CD4-positive, alpha-beta T cell (primary cell): ENCODE measurements at regions of chr22 and their contacts with region 1.

Region 1: DNA sequence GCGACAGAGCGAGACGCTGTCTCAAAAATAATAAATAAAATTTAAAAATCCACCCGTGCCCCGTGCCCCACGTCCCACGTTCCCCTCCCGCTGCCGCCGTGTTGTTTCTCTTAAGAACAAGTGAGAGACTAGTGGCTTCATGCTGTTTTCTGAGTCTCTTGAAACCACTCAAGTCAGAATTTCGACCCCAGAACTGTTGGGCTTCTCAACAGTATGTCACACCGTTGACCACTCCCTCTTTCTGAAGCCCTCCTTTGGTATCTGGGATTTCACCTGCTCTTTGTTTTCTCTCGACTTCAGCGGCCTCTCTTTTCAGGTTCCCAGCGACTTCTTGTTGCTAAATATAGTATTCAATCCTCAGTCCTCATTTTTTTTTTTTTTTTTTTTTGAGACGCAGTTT is 974 bp downstream of the PPIL2 start:
- DNase-seq: no peak
- ATAC-seq: no peak
- H3K4me3 ChIP-seq: peak overlapping the region; percentile 95
- H3K4me3 Mint-ChIP-seq: peak overlapping the region; percentile 99
- H3K27ac ChIP-seq: no peak overlapping the region
- H3K27ac Mint-ChIP-seq: peak overlapping the region; percentile 92
- H3K4me1 ChIP-seq: peaks cover 30% of the 10 kb centered on the region
- H3K4me1 Mint-ChIP-seq: peaks cover 32% of the 10 kb centered on the region
- H3K27me3 ChIP-seq: no peaks in the 10 kb centered on the region
- H3K27me3 Mint-ChIP-seq: no peaks in the 10 kb centered on the region
- CTCF ChIP-seq: no peak

Region 2: DNA sequence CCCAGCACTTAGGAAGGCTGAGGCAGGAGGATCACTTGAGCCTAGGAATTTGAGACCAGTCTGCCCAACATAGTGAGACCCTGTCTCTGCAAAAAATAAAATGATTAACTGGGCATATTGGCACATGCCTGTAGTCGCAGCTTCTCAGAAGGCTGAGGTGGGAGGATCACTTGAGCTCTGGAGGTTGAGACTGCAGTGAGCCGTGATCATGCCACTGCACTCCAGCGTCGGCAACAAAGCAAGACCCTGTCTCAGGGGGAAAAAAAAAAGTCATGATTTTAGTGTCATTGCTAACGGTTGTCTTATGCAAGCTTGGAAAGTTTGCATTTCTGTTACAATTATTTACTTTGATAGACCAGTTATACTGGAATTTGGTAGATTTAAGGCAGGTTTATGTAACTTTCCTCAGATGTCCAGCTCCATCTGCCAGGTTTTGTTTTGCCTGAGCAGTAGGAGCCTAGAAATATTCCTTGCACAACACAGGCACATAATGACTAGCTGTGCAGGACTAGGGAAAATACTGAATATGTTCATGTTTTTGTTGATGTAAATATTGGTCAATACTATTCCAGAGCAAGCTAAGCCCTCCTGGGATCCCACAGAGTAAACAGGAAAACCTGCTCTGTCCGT is 87.2 kb before region 1 on chr22:
- CTCF ChIA-PET with region 1: no interaction called
- POLR2A ChIA-PET with region 1: no interaction called
- intact Hi-C with region 1: no loop called
- DNase-seq: no peak
- ATAC-seq: no peak
- H3K4me3 ChIP-seq: no peak overlapping the region
- H3K4me3 Mint-ChIP-seq: no peak overlapping the region
- H3K27ac ChIP-seq: no peak overlapping the region
- H3K27ac Mint-ChIP-seq: no peak overlapping the region
- H3K4me1 ChIP-seq: peaks cover 68% of the 10 kb centered on the region
- H3K4me1 Mint-ChIP-seq: peaks cover 49% of the 10 kb centered on the region
- H3K27me3 ChIP-seq: no peaks in the 10 kb centered on the region
- H3K27me3 Mint-ChIP-seq: no peaks in the 10 kb centered on the region
- CTCF ChIP-seq: no peak

Region 3: DNA sequence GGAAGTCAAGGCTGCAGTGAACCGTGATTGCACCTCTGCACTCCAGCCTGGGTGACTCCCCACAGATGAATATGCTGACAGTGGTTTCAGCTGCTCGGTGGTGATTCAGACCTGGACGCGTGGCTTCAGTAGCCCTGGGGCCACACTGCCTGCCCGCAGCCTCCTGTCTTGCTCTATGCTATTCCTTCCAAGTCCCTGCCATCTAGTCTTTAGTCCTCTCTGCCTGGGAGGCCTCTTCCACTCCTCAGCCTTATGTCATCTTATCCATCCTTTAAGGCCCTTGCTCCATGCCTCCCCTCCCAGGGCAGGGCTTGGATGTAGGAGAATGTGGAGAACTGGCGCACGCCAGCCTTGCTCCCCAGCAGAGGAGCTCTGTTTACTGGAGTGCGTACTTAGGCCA is 60.0 kb before region 1 on chr22:
- CTCF ChIA-PET with region 1: no interaction called
- POLR2A ChIA-PET with region 1: no interaction called
- intact Hi-C with region 1: no loop called
- DNase-seq: no peak
- ATAC-seq: no peak
- H3K4me3 ChIP-seq: no peak overlapping the region
- H3K4me3 Mint-ChIP-seq: no peak overlapping the region
- H3K27ac ChIP-seq: no peak overlapping the region
- H3K27ac Mint-ChIP-seq: peak overlapping the region; percentile 42
- H3K4me1 ChIP-seq: peaks cover 24% of the 10 kb centered on the region
- H3K4me1 Mint-ChIP-seq: peaks cover 46% of the 10 kb centered on the region
- H3K27me3 ChIP-seq: no peaks in the 10 kb centered on the region
- H3K27me3 Mint-ChIP-seq: no peaks in the 10 kb centered on the region
- CTCF ChIP-seq: no peak

Region 4: DNA sequence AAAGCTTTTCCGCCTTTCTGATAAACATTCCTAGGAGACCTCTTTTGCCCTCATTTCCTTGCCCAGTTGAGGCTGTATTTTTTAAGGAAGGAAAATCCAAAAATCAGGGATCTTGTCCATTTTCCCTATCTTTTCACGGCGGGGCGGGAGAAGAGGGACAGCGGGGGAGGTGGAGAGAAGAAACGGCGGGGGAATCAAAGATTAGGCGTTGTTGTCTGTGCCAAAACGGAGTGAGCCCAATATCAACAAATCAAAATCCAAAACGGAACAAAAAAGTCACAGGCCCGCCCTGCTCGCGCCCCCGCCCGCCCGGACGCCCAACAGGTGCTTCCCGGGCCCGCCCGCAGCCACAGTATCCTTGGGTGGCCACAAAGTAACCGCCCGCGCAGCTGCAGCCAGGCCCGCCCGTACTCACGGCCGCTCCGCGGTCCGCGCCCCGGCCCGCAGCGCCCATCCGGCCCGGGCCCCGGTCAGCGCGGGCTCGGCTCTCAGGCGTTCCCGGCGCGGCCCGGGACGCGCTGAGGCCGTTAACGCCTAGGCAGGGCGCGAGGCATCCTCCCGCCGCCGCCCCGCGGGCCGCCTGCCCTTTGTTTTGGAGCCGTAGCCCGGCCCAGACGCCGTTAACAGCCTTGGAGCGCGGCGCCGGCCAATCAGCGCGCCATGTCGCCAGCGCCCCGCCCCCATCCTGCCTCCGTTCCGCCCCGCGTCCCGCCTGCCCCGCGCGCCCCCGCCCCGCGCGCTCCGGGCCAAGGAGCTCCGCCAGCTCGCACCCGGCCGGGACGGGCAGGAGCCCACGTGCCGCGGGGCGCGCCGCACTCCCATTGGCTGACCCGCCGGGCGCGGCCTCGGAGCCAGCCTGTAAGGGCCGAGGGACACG is 68.7 kb after region 1 on chr22 and contains the start of gene YPEL1:
- CTCF ChIA-PET with region 1: no interaction called
- POLR2A ChIA-PET with region 1: no interaction called
- intact Hi-C with region 1: loop called in 1 of 2 experiments (anchors 2 kb)
- DNase-seq: peak; percentile 91 to 99 (median 96)
- ATAC-seq: peak; percentile 94
- H3K4me3 ChIP-seq: peak within 1 kb of the TSS; percentile 56
- H3K4me3 Mint-ChIP-seq: peak within 1 kb of the TSS; percentile 80
- H3K27ac ChIP-seq: peak within 1 kb of the TSS; percentile 57 to 59
- H3K27ac Mint-ChIP-seq: peak within 1 kb of the TSS; percentile 79
- H3K4me1 ChIP-seq: peaks cover 23% of the 10 kb centered on the region
- H3K4me1 Mint-ChIP-seq: peaks cover 14% of the 10 kb centered on the region
- H3K27me3 ChIP-seq: no peaks in the 10 kb centered on the region
- H3K27me3 Mint-ChIP-seq: no peaks in the 10 kb centered on the region
- CTCF ChIP-seq: no peak
- total RNA-seq, gene YPEL1: 2.3 to 2.6 TPM